Adrenal gland (tissue), 19 donors: ENCODE measurements at regions of chr20 and their contacts with region 1.

Region 1: DNA sequence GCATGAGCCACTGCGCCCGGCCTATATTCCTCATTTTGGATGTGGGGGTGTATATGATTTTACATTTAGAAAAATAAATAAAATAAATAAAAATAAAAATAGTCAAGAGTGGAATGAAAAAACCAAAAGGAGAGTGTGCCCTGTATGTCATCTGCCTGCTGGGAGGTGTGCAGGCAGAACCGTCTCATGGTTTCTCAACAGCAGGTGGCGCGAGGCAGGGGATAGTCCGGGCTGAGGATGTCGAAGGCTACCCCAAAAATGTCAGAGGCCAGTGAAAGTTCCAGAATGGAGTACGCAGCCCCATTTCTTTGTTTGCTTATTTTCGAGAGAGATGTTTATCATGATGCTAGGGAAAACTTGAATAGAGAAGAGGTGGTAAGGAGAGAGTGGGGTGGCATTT is 16.4 kb upstream of the KIF16B start:
- DNase-seq: no peak
- H3K4me3 ChIP-seq: no peak overlapping the region
- H3K27ac ChIP-seq: no peak overlapping the region
- H3K4me1 ChIP-seq: no peaks in the 10 kb centered on the region
- H3K27me3 ChIP-seq: no peaks in the 10 kb centered on the region
- CTCF ChIP-seq: no peak
- POLR2A ChIP-seq: no peak

Region 2: GRCh38 chr20:16639027-16639941 is 49.7 kb after region 1 on chr20:
- intact Hi-C with region 1: loop called in 1 of 2 experiments (anchors 5 kb)
- DNase-seq: no peak
- H3K4me3 ChIP-seq: no peak overlapping the region
- H3K27ac ChIP-seq: no peak overlapping the region
- H3K4me1 ChIP-seq: no peaks in the 10 kb centered on the region
- H3K27me3 ChIP-seq: no peaks in the 10 kb centered on the region
- CTCF ChIP-seq: no peak
- POLR2A ChIP-seq: no peak